Activated naive CD4-positive, alpha-beta T cell treated with anti-CD3 and anti-CD28 coated beads for 36 hours (primary cell): ENCODE measurements at regions of chr11 and their contacts with region 1.

Region 1: DNA sequence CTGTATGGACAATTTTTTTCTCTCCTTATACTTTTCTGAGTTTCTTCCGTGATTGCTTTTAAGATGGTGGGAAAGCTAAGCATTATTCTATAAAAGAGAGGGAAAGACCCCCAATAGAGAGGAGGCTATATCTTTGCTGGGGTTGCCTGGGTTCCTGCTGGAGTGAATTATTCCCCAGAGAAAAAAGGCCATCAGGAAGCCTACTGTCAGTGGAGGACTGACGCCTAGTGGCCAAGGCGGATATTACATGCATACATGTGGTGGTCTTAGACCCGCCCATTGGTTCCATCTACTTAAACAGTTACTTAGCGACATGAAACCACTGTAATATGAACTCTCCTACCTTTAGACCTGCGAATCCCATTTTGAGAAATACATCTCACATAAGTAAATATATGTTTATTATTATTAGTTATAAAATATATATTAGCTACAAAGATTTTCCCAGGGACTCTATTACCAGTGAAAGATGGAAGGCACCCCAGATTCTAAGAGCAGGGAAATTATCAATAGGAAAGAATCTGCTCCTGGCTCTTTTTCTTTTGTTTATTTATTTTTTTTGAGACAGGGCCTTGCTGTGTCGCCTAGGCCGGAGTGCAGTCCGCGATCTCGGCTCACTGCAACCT is 15.7 kb upstream of the PGA3 start:
- DNase-seq: peak; percentile 90
- H3K4me3 Mint-ChIP-seq: no peak overlapping the region
- H3K27ac Mint-ChIP-seq: no peak overlapping the region
- H3K4me1 Mint-ChIP-seq: peaks cover 2% of the 10 kb centered on the region
- H3K27me3 Mint-ChIP-seq: no peaks in the 10 kb centered on the region

Region 2: DNA sequence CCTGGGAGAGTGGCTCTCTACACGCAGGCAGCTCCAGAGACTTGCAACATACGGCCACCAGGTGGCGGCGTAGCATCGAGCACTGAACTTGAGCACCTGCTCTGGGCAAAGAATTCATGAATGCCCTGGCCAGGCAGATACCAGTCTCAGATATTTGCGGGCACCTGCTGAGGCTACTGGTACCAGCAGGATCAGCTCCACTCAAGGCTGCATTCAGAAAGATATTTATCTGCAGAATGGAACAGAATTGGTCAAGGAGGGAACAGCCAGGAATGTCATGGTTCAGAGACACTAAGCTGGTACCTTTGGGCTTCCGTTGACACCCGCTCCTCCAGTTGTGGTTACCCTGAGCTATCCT is 356.5 kb before region 1 on chr11:
- CTCF ChIA-PET with region 1: interaction called, 72 read pairs
- intact Hi-C with region 1: loop called (anchors 1 kb)
- DNase-seq: peak; percentile 90
- H3K4me3 Mint-ChIP-seq: no peak overlapping the region
- H3K27ac Mint-ChIP-seq: no peak overlapping the region
- H3K4me1 Mint-ChIP-seq: no peaks in the 10 kb centered on the region
- H3K27me3 Mint-ChIP-seq: no peaks in the 10 kb centered on the region

Region 3: GRCh38 chr11:60992842-60993409 is 194.7 kb before region 1 on chr11:
- CTCF ChIA-PET with region 1: no interaction called
- intact Hi-C with region 1: no loop called
- DNase-seq: no peak
- H3K4me3 Mint-ChIP-seq: peak overlapping the region; percentile 74
- H3K27ac Mint-ChIP-seq: peak overlapping the region; percentile 98
- H3K4me1 Mint-ChIP-seq: peaks cover 81% of the 10 kb centered on the region
- H3K27me3 Mint-ChIP-seq: no peaks in the 10 kb centered on the region

Region 4: GRCh38 chr11:61021661-61022212 is 165.9 kb before region 1 on chr11:
- CTCF ChIA-PET with region 1: interaction called, 5 read pairs
- intact Hi-C with region 1: loop called (anchors 1 kb)
- DNase-seq: peak; percentile 97
- H3K4me3 Mint-ChIP-seq: peak overlapping the region; percentile 81
- H3K27ac Mint-ChIP-seq: peak overlapping the region; percentile 100
- H3K4me1 Mint-ChIP-seq: peaks cover 78% of the 10 kb centered on the region
- H3K27me3 Mint-ChIP-seq: no peaks in the 10 kb centered on the region

Region 5: GRCh38 chr11:61138940-61139339 is 48.7 kb before region 1 on chr11:
- CTCF ChIA-PET with region 1: interaction called, 12 read pairs
- intact Hi-C with region 1: no loop called
- DNase-seq: no peak
- H3K4me3 Mint-ChIP-seq: no peak overlapping the region
- H3K27ac Mint-ChIP-seq: no peak overlapping the region
- H3K4me1 Mint-ChIP-seq: peaks cover 7% of the 10 kb centered on the region
- H3K27me3 Mint-ChIP-seq: no peaks in the 10 kb centered on the region

Region 6: DNA sequence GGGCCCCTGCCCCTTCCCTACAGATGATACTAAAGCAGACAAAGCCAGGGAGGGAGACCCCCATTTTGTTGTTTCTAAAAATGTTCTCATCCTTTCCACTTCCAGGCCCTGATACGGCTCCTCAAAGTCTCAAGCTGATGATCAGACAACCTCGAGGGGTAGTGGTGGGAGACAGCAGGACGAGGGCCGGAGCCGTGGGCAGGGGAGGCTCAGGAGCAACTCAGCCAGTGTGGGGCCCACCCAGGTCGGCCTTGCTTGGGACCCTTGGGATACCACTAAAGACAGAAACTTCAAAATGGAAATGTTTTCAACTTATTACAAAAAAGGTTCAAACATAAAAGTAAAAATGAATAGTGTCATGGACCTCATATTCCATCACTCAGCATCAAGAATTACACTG is 11.2 kb before region 1 on chr11:
- CTCF ChIA-PET with region 1: interaction called, 30 read pairs
- intact Hi-C with region 1: no loop called
- DNase-seq: no peak
- H3K4me3 Mint-ChIP-seq: no peak overlapping the region
- H3K27ac Mint-ChIP-seq: no peak overlapping the region
- H3K4me1 Mint-ChIP-seq: peaks cover 13% of the 10 kb centered on the region
- H3K27me3 Mint-ChIP-seq: no peaks in the 10 kb centered on the region